GM12878 (cell line): ENCODE measurements at regions of chr6 and their contacts with region 1.

Region 1: GRCh38 chr6:139219271-139219729 is 72.5 kb downstream of the TXLNB start:
- DNase-seq: peak; percentile 82
- ATAC-seq: peak; percentile 100
- H3K4me3 ChIP-seq: no peak overlapping the region
- H3K27ac ChIP-seq: peak overlapping the region; percentile 20; the same call in 1 of the 2 replicates
- H3K4me1 ChIP-seq: peaks cover 3% of the 10 kb centered on the region; the same call in 1 of the 2 replicates
- H3K27me3 ChIP-seq: no peaks in the 10 kb centered on the region
- CTCF ChIP-seq: peak; percentile 88 to 99 (median 93); a peak in 5 of 6 replicates
- EP300 ChIP-seq: peak in 1 of 2 experiments; percentile 25; a peak in 1 of 4 replicates
- POLR2A ChIP-seq: peak; percentile 44; the same call in 1 of the 2 replicates
- RAD21 ChIP-seq: peak; percentile 99

Region 2: DNA sequence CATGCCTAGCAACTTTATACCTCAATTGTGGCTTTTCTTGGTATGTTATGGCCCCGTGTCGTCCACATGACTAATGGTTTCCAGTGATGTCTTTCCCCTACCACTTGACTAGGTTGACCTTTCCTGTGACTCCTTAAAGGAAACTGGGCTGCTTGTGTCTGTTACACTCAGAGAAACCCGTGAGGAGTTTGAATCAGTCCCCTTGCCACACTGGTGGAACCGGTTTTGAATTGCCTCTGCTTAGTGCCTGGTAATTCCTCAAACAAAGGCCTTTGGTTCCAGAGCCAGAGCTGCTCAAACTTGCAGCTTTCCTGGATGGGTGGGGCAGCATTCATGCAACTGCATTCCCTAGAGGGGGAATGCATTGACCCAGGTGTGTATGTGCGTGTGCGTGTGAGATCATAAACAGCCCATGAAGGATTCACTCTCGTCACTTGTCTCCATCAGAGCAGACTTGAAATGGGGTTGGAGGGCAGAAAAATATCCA is 401.4 kb before region 1 on chr6:
- CTCF ChIA-PET with region 1: interaction called, 37 read pairs
- POLR2A ChIA-PET with region 1: no interaction called
- RAD21 ChIA-PET with region 1: interaction called, 13 read pairs
- SMC1A ChIA-PET with region 1: interaction called, 10 read pairs
- in situ Hi-C with region 1: no loop called
- intact Hi-C with region 1: loop called (anchors 2 kb)
- DNase-seq: no peak
- ATAC-seq: peak; percentile 51
- H3K4me3 ChIP-seq: no peak overlapping the region
- H3K27ac ChIP-seq: no peak overlapping the region; the same call in 1 of the 2 replicates
- H3K4me1 ChIP-seq: peaks cover 18% of the 10 kb centered on the region
- H3K27me3 ChIP-seq: no peaks in the 10 kb centered on the region
- CTCF ChIP-seq: no peak
- EP300 ChIP-seq: no peak
- POLR2A ChIP-seq: no peak
- RAD21 ChIP-seq: no peak

Region 3: GRCh38 chr6:139230391-139230840 is 11.1 kb after region 1 on chr6:
- CTCF ChIA-PET with region 1: interaction called, 41 read pairs
- POLR2A ChIA-PET with region 1: no interaction called
- RAD21 ChIA-PET with region 1: interaction called, 9 read pairs
- SMC1A ChIA-PET with region 1: interaction called, 21 read pairs
- in situ Hi-C with region 1: no loop called
- intact Hi-C with region 1: no loop called
- DNase-seq: no peak
- ATAC-seq: 0 out of 3 replicates have a peak, but pooled peaks have one; percentile 18
- H3K4me3 ChIP-seq: no peak overlapping the region
- H3K27ac ChIP-seq: no peak overlapping the region
- H3K4me1 ChIP-seq: no peaks in the 10 kb centered on the region
- H3K27me3 ChIP-seq: no peaks in the 10 kb centered on the region
- CTCF ChIP-seq: peak in 2 of 3 experiments; percentile 17 to 43; a peak in 3 of 6 replicates
- EP300 ChIP-seq: no peak
- POLR2A ChIP-seq: no peak
- RAD21 ChIP-seq: peak; percentile 63

Region 4: DNA sequence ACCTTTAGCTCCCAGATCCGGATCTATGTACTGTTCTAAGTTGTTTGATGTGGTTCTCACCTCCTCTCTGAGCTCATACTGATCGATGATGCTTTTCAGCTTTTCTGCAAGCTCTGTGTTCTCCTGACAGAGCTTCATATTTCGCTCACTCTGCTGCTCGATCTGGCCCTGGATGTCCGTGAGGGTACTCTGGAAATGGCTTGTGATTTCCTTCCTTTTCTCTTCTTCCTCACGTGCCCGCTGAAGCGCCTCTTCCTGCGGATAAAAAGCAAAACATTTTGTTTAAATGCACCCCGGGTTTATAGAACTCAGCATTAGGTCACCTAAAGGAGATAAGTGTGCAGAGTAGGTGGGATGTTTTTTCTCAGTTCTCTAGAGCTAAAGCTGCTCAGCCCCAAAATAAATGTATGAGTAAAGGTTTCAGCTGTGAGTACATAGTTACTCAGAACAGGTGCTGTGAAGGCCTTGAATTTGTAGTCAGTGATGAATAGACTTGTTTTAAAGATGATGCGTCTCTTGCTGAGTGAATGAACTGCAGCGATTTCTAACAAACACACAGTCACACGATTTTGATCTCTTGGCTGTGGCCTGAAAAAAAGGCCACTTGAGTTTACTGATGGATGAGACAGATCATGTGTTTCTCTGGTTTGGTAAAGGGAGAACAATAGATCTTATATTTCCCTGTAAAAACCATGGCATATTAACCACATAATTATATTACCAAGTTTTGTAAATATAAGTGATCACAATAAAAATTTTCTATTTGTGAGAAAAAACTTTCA is 43.4 kb after region 1 on chr6:
- CTCF ChIA-PET with region 1: interaction called, 15 read pairs
- POLR2A ChIA-PET with region 1: interaction called, 3 read pairs
- RAD21 ChIA-PET with region 1: interaction called, 6 read pairs
- SMC1A ChIA-PET with region 1: interaction called, 13 read pairs
- in situ Hi-C with region 1: no loop called
- intact Hi-C with region 1: no loop called
- DNase-seq: no peak
- ATAC-seq: peak; percentile 94
- H3K4me3 ChIP-seq: no peak overlapping the region
- H3K27ac ChIP-seq: no peak overlapping the region
- H3K4me1 ChIP-seq: no peaks in the 10 kb centered on the region
- H3K27me3 ChIP-seq: no peaks in the 10 kb centered on the region
- CTCF ChIP-seq: no peak
- EP300 ChIP-seq: peak in 1 of 2 experiments; percentile 15; a peak in 1 of 4 replicates
- POLR2A ChIP-seq: no peak
- RAD21 ChIP-seq: no peak

Region 5: DNA sequence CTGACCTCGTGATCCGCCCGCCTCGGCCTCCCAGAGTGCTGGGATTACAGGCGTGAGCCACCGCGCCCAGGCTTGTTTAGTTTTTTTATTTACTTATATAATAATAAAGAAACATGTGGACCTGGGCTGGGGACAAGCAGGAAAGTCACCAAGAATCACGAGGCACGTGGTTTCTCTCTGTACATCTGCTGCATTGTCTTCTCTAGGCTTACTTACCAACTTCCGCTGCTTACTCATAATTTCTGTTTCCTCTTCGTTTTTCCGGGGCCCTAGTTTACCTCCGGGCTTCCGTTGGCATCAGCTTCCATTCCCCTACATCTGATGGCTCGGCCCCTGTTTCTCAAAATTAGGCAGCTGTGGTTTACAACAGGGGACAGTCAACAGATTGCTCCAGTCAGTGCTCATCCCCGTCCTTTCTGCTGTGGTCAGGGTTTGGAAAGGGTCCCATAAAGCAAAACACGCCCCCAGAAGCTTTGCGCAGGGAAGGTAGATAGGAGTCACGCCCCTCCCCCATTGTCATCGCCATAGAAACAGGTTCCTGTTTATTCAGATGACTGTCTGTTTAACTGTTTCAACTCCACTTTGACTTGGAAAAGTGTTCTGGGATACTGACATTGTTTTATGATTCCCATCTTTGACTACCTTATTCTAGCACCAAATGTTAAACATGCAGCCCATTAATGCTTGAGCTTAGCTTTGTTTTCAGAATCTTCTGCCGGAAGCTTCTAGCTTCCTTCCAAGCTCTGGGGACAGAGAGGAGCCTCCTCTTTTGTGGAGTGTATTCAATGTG is 104.4 kb after region 1 on chr6:
- CTCF ChIA-PET with region 1: interaction called, 28 read pairs
- POLR2A ChIA-PET with region 1: no interaction called
- RAD21 ChIA-PET with region 1: interaction called, 7 read pairs
- SMC1A ChIA-PET with region 1: interaction called, 60 read pairs
- in situ Hi-C with region 1: no loop called
- intact Hi-C with region 1: no loop called
- DNase-seq: no peak
- ATAC-seq: peak; percentile 42
- H3K4me3 ChIP-seq: no peak overlapping the region
- H3K27ac ChIP-seq: peak overlapping the region; percentile 34; the same call in 1 of the 2 replicates
- H3K4me1 ChIP-seq: peaks cover 27% of the 10 kb centered on the region
- H3K27me3 ChIP-seq: no peaks in the 10 kb centered on the region
- CTCF ChIP-seq: no peak
- EP300 ChIP-seq: 0 out of 4 replicates have a peak, but pooled peaks of 1 of the 2 experiments have one; percentile 38
- POLR2A ChIP-seq: no peak
- RAD21 ChIP-seq: no peak

Region 6: GRCh38 chr6:139355172-139355571 is 135.9 kb after region 1 on chr6:
- CTCF ChIA-PET with region 1: interaction called, 75 read pairs
- POLR2A ChIA-PET with region 1: interaction called, 5 read pairs
- RAD21 ChIA-PET with region 1: interaction called, 49 read pairs
- SMC1A ChIA-PET with region 1: interaction called, 83 read pairs
- in situ Hi-C with region 1: no loop called
- intact Hi-C with region 1: no loop called
- DNase-seq: no peak
- ATAC-seq: peak; percentile 80
- H3K4me3 ChIP-seq: no peak overlapping the region
- H3K27ac ChIP-seq: no peak overlapping the region
- H3K4me1 ChIP-seq: no peaks in the 10 kb centered on the region
- H3K27me3 ChIP-seq: no peaks in the 10 kb centered on the region
- CTCF ChIP-seq: no peak
- EP300 ChIP-seq: no peak
- POLR2A ChIP-seq: no peak
- RAD21 ChIP-seq: no peak

Region 7: GRCh38 chr6:139655790-139656687 is 436.7 kb after region 1 on chr6:
- CTCF ChIA-PET with region 1: no interaction called
- POLR2A ChIA-PET with region 1: no interaction called
- RAD21 ChIA-PET with region 1: no interaction called
- SMC1A ChIA-PET with region 1: no interaction called
- in situ Hi-C with region 1: no loop called
- intact Hi-C with region 1: no loop called
- DNase-seq: no peak
- ATAC-seq: no peak
- H3K4me3 ChIP-seq: no peak overlapping the region
- H3K27ac ChIP-seq: no peak overlapping the region
- H3K4me1 ChIP-seq: no peaks in the 10 kb centered on the region
- H3K27me3 ChIP-seq: no peaks in the 10 kb centered on the region
- CTCF ChIP-seq: no peak
- EP300 ChIP-seq: no peak
- POLR2A ChIP-seq: no peak
- RAD21 ChIP-seq: no peak